ENCODE measurements at regions of chr2 and their contacts with region 1.

Region 1: DNA sequence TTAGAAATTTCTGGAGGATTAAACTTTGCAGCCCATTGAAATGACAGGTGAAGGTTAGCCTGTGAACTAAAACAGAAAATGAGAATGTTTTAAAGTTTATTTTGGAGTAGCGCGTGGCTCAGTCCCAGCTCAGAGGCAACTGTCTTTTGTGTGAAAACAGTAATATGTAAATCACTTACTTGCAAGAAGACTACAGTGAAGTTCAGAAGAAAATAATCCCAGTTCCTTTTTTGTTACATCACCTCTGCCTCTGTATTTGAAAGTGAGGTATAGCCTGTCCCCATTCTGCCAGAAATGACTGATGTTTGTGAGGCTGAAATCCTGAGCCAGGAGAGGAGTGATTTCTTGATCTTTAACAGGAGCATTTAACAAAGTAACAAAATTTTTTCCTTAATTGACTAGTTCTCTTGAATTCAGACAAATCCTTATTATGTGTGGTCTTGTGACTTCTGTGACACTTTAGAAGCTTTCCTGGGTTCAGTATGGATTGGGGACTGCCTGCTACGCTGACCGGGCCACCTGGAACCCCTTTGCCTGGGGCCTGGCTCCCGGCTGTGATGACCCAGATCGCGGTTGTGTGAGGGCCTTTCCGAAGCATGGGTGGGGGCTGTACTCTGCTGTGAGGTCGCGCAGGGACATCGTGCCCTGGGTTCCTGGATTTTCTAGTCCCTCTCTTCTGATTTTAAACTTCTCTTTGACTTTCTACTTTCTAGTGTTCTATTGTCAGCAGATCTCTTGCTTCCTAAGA is 24.3 kb downstream of the TRAPPC12 start:
- DNase-seq: no peak
- ATAC-seq: no peak
- H3K4me3 ChIP-seq: no peak overlapping the region
- H3K4me3 Mint-ChIP-seq: no peak overlapping the region
- H3K27ac ChIP-seq: no peak overlapping the region
- H3K27ac Mint-ChIP-seq: no peak overlapping the region
- H3K4me1 ChIP-seq: no peaks in the 10 kb centered on the region
- H3K4me1 Mint-ChIP-seq: peaks cover 0 to 39% (median 25%) of the 10 kb centered on the region in 7 donors
- H3K27me3 ChIP-seq: no peaks in the 10 kb centered on the region
- H3K27me3 Mint-ChIP-seq: no peaks in the 10 kb centered on the region

Region 2: DNA sequence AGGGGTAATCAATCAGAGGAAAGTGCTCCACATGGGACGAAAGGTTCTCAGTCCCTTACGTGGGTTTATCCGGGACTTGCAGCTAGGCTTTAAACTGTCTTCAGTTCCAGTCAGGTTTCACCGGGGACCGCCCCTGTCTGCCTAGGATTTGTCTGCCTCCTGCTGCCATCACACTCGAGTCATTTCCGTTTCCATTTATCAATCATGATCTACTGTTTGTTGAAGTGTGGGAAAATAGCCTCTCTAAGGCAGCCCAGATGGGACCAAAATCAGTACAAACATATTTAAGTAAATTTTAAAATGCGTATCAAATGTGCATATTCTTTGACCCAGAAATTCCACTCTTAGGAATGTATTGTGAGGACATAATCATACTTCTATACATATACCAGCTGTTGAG is 13.7 kb before region 1 on chr2:
- CTCF ChIA-PET with region 1: no interaction called
- POLR2A ChIA-PET with region 1: no interaction called
- intact Hi-C with region 1: loop called in 1 of 2 experiments (anchors 1 kb)
- DNase-seq: no peak
- ATAC-seq: no peak
- H3K4me3 ChIP-seq: no peak overlapping the region
- H3K4me3 Mint-ChIP-seq: no peak overlapping the region
- H3K27ac ChIP-seq: no peak overlapping the region
- H3K27ac Mint-ChIP-seq: peak overlapping the region in 2 of 9 donors; percentile 38 to 81
- H3K4me1 ChIP-seq: no peaks in the 10 kb centered on the region
- H3K4me1 Mint-ChIP-seq: peaks cover 13 to 52% (median 41%) of the 10 kb centered on the region in 7 donors
- H3K27me3 ChIP-seq: no peaks in the 10 kb centered on the region
- H3K27me3 Mint-ChIP-seq: no peaks in the 10 kb centered on the region